ENCODE measurements at regions of chr13 and their contacts with region 1.

Region 1: GRCh38 chr13:113547238-113547971 is 37.1 kb upstream of the TFDP1 start:
- DNase-seq: no peak
- ATAC-seq: no peak
- H3K4me3 ChIP-seq: no peak overlapping the region
- H3K27ac ChIP-seq: no peak overlapping the region
- H3K4me1 ChIP-seq: no peaks in the 10 kb centered on the region
- H3K27me3 ChIP-seq: no peaks in the 10 kb centered on the region
- CTCF ChIP-seq: no peak

Region 2: DNA sequence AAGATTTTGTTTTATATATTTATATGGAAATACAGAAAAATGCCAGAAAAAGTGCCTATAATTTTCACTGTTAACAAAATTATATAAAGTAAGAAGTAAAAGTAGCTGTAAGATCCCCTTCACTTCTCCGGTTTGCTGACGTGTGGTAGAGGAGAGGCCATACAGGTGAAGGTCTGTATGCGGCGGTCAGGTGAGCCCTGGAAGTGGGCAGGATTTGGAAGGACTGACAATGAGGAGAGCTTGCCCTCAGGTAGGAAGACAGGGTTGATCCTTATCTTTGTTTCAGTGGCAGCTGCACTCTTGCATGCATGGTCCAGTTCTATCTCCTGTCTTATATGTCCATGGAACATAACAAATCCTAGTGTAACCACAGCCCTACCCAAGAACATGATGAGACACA is 20.3 kb after region 1 on chr13:
- CTCF ChIA-PET with region 1: interaction called, 10 read pairs
- POLR2A ChIA-PET with region 1: no interaction called
- in situ Hi-C with region 1: no loop called
- intact Hi-C with region 1: no loop called
- DNase-seq: no peak
- ATAC-seq: no peak
- H3K4me3 ChIP-seq: no peak overlapping the region
- H3K27ac ChIP-seq: no peak overlapping the region
- H3K4me1 ChIP-seq: no peaks in the 10 kb centered on the region
- H3K27me3 ChIP-seq: no peaks in the 10 kb centered on the region
- CTCF ChIP-seq: no peak